GM23248 (cell line): ENCODE measurements at regions of chr1 and their contacts with region 1.

Region 1: DNA sequence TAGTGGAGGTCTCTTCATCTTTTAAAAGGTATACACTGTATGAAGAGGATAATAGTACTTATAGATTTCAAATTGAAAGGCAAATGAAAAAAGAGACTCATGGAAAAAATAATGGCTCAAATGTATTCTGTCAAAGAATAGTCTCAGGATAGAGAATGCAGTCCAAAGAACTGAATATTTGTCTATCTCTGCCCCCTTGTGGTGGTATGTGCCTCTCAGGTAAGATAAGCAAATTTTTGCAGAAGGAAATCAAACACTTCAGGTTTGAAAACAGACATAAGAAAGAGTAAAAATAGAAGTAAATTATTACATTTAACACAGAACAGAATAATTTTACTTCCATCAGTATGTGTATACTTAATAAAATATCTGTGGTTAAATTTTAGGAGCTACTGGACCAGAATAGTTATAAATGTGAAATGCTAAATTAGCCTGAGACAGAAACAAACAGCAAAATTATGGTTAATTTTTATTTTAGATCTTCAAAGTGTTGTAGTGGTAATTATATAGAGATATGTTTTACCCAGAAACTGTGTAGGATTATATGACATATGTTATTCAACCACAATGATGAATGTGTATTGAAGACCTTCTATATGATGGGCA is 164.4 kb upstream of the PALMD start:
- DNase-seq: peak; percentile 80
- H3K4me3 ChIP-seq: no peak overlapping the region
- H3K27ac ChIP-seq: no peak overlapping the region
- H3K4me1 ChIP-seq: no peaks in the 10 kb centered on the region
- H3K27me3 ChIP-seq: no peaks in the 10 kb centered on the region

Region 2: GRCh38 chr1:99146129-99146851 is 335.2 kb before region 1 on chr1:
- in situ Hi-C with region 1: no loop called
- DNase-seq: no peak
- H3K4me3 ChIP-seq: no peak overlapping the region
- H3K27ac ChIP-seq: no peak overlapping the region
- H3K4me1 ChIP-seq: no peaks in the 10 kb centered on the region
- H3K27me3 ChIP-seq: no peaks in the 10 kb centered on the region

Region 3: GRCh38 chr1:99180343-99180808 is 301.1 kb before region 1 on chr1:
- in situ Hi-C with region 1: loop called (anchors 10 kb)
- DNase-seq: peak; percentile 80
- H3K4me3 ChIP-seq: no peak overlapping the region
- H3K27ac ChIP-seq: no peak overlapping the region
- H3K4me1 ChIP-seq: no peaks in the 10 kb centered on the region
- H3K27me3 ChIP-seq: no peaks in the 10 kb centered on the region

Region 4: DNA sequence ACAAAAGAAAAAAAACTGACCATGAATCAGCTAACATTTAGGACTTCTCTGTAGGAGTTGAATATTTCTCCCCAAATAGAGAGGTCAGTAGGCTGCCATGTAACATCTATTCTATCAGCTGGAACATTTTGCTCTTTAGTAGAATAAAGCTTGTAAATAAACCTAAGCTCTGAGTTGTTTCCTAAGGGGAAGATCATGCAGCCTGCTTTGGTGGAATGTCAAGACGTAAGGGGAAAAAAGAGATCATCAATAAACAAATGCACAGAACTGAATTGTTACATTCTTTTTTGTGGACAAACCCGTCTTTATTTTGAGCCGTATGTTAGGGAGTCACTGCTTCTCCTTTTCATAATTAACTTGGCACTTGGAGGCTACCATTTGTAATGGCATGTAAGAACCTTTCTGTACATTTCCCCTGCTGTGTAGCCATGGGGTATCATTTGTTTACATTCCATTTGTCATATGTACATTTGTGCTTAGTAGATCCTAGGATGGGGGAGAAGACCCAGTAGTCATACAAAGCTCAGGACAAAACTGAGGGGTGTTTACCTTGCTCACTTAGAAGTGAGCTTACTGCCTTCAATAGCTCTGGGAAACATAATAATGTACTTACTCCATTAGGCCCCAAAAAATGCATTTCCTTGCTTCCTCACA is 153.6 kb after region 1 on chr1:
- in situ Hi-C with region 1: no loop called
- DNase-seq: no peak
- H3K4me3 ChIP-seq: no peak overlapping the region
- H3K27ac ChIP-seq: no peak overlapping the region
- H3K4me1 ChIP-seq: no peaks in the 10 kb centered on the region
- H3K27me3 ChIP-seq: no peaks in the 10 kb centered on the region

Region 5: DNA sequence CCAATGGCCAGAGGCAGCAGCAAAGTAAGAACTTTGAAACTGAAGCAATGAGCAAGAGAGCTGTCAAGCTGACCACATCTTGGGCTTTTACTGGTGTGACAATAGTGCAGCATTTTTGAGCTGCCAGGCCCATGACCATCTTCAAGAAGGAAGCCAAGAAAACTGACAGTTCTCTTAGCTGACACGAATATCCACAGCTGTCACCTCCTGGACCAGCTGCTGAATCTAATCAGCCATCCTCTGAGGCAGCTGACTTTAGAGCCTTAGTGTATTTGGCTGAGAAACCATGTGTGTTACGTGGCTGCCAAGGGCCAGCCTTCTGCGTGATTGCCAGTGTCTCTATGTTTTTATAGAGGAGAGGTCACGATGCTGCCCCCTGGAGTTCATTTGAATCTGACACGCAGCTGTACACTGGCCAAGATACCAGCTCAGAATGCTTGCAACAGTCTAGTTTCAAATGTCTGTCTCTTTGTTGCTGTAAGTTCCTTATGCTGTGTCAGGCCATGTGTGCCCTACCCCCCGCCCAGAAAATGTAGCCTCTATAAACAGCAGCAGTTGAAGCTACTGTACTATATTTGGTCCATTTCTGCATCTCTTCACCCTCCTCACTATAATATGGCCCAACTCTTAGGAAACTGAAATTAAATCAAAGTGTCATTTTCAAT is 204.2 kb after region 1 on chr1:
- in situ Hi-C with region 1: loop called (anchors 25 kb)
- DNase-seq: peak; percentile 92
- H3K4me3 ChIP-seq: no peak overlapping the region
- H3K27ac ChIP-seq: peak overlapping the region; percentile 46
- H3K4me1 ChIP-seq: peaks cover 27% of the 10 kb centered on the region
- H3K27me3 ChIP-seq: no peaks in the 10 kb centered on the region